ENCODE measurements at regions of chr7 and their contacts with region 1.

Region 1: GRCh38 chr7:140209866-140210609 is 33.3 kb upstream of the KDM7A start:
- DNase-seq: peak; percentile 64
- H3K4me3 Mint-ChIP-seq: peak overlapping the region; percentile 71
- H3K27ac Mint-ChIP-seq: peak overlapping the region; percentile 86
- H3K4me1 Mint-ChIP-seq: peaks cover 79% of the 10 kb centered on the region
- H3K27me3 Mint-ChIP-seq: no peaks in the 10 kb centered on the region

Region 2: GRCh38 chr7:140222814-140223213 is 12.8 kb after region 1 on chr7:
- intact Hi-C with region 1: loop called (anchors 1 kb)
- DNase-seq: no peak
- H3K4me3 Mint-ChIP-seq: peak overlapping the region; percentile 5
- H3K27ac Mint-ChIP-seq: no peak overlapping the region
- H3K4me1 Mint-ChIP-seq: peaks cover 53% of the 10 kb centered on the region
- H3K27me3 Mint-ChIP-seq: no peaks in the 10 kb centered on the region